Left cardiac atrium (tissue), 4 donors: ENCODE measurements at regions of chr4 and their contacts with region 1.

Region 1: GRCh38 chr4:185754961-185755360 is 57.0 kb downstream of the SORBS2 start:
- DNase-seq: peak; percentile 58
- ATAC-seq: peak; percentile 44 to 53

Region 2: DNA sequence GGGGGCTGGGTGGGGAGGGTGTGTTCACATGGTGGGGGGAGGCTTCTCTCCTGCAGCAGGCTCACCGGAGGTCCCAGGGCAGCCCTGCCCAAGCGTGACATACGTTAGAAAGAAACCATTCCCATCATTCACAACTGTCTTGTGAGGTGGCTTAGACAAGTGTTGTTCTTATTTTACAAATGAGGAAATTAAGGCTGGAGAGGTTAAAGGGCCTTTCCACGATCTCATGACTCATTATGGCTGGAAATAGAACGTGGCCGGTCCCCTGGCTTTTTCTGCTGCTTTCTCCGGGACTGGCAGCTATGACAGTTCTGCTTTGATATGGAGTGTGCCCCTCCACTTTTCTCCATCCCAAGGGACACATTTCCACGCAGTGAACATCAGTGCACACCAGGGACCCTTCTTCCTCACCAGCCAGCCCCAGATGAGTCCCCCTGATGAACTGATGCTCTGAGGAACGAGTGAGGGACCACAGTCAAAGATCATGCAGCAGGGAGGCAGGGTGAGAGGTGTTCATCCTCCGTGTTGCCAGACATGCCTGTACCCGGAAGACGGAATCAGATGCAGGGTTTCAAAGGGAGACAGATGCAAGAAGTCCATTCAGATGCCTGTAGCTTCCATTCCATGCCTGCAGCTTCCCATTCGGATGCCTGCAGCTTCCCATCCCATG is 865.2 kb before region 1 on chr4:
- intact Hi-C with region 1: no loop called
- DNase-seq: no peak
- ATAC-seq: peak in 1 of 2 donors; percentile 24

Region 3: GRCh38 chr4:185597532-185598188 is 157.3 kb before region 1 on chr4:
- intact Hi-C with region 1: no loop called
- DNase-seq: peak; percentile 82
- ATAC-seq: peak; percentile 60 to 66

Region 4: DNA sequence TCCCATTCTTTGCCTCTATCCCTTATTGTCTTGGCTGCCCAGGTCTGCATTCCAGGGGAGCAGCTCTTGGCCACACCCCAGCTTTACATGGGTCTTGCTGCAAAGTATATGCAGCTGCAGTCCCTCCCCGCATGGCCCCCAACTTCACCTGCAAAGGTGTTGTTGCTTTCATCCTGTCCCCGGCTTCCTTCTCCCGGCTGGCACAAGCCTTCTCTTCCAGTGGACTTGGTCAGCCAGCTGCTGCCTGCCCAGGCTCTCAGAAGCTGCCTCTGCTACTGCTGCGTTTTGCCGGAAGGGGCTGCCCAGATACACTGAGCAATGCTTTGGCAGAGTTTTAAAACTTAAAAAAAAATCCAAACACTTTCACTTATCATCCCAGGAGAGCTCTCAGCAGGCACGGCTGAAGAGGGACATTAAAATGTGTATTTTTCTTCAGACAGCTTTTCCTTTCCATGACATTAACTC is 98.5 kb before region 1 on chr4:
- intact Hi-C with region 1: loop called in 1 of 2 experiments (anchors 10 kb)
- DNase-seq: peak; percentile 67
- ATAC-seq: peak; percentile 88 to 92